PC-9 (cell line): ENCODE measurements at regions of chr1 and their contacts with region 1.

Region 1: GRCh38 chr1:244712669-244713068 is 59.7 kb downstream of the DESI2 start:
- DNase-seq: no peak
- H3K4me3 ChIP-seq: no peak overlapping the region
- H3K27ac ChIP-seq: no peak overlapping the region
- H3K4me1 ChIP-seq: no peaks in the 10 kb centered on the region
- H3K27me3 ChIP-seq: no peaks in the 10 kb centered on the region
- CTCF ChIP-seq: no peak

Region 2: DNA sequence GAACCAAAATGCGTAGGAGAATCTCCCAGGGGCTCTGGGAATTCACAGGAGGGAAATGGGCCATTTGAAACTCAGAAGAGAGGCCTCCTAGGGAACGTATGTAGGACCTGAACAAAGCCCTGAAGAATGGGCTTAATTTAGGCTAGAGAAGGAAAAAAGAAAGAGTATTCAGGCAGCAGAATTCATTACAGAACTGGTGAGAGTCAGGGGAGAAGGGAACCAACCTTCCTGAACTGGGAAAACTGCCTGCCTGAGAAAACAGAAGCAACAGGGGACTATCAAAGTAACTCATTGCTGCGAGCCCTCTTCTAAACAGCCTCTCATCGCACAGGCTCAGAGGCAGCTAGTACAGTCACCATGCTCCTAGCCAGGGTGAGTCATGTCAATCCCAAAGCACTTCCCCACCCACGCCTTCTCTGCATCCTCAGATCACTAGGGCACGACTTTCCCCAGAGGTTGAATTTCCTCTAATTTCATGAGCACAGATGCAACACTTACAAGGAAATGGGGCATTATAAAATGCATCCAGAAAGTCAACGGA is 359.0 kb before region 1 on chr1:
- CTCF ChIA-PET with region 1: no interaction called
- POLR2A ChIA-PET with region 1: no interaction called
- intact Hi-C with region 1: no loop called
- DNase-seq: peak; percentile 73 to 91
- H3K4me3 ChIP-seq: no peak overlapping the region
- H3K27ac ChIP-seq: peak overlapping the region; percentile 78
- H3K4me1 ChIP-seq: peaks cover 16% of the 10 kb centered on the region
- H3K27me3 ChIP-seq: no peaks in the 10 kb centered on the region
- CTCF ChIP-seq: no peak

Region 3: GRCh38 chr1:244576259-244576892 is 136.3 kb before region 1 on chr1:
- CTCF ChIA-PET with region 1: no interaction called
- POLR2A ChIA-PET with region 1: no interaction called
- intact Hi-C with region 1: no loop called
- DNase-seq: no peak
- H3K4me3 ChIP-seq: no peak overlapping the region
- H3K27ac ChIP-seq: no peak overlapping the region
- H3K4me1 ChIP-seq: no peaks in the 10 kb centered on the region
- H3K27me3 ChIP-seq: no peaks in the 10 kb centered on the region
- CTCF ChIP-seq: no peak

Region 4: GRCh38 chr1:244614113-244614836 is 98.4 kb before region 1 on chr1:
- CTCF ChIA-PET with region 1: no interaction called
- POLR2A ChIA-PET with region 1: no interaction called
- intact Hi-C with region 1: no loop called
- DNase-seq: no peak
- H3K4me3 ChIP-seq: no peak overlapping the region
- H3K27ac ChIP-seq: no peak overlapping the region
- H3K4me1 ChIP-seq: no peaks in the 10 kb centered on the region
- H3K27me3 ChIP-seq: no peaks in the 10 kb centered on the region
- CTCF ChIP-seq: no peak

Region 5: DNA sequence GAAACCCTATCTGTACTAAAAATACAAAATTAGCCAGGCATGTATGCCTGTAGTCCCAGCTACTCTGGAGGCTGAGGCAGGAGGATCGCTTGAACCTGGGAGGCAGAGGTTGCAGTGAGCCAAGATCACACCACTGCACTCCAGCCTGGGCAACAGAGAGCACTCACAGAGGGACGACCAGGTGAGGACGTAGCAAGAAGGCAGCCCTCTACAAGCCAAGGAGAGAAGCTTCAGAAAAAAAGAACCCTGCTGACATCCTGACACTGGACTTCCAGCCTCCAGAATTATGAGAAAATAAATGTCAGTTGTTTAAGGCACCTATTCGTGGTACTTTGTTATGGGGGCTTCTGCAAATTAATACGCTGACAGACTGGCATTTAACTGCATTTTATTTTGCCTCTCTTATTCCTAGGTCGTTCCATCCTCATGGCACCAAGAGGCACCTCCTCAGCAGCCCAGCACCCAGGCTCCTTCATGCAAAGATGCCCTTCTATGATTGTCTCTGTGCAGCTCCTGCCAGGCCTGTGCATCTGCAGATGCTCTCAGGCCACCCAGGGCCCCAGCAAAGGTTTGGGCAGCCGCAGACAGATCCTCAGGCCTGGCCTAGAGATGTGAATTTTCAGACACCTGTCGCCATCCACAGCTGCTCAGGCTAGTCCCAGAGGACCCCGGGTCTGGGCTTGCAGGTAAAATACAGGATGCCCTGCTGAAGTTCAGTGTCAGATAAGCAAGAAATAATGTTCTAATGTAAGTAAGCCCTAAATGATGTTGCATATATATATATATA is 36.8 kb after region 1 on chr1:
- CTCF ChIA-PET with region 1: no interaction called
- POLR2A ChIA-PET with region 1: no interaction called
- intact Hi-C with region 1: no loop called
- DNase-seq: no peak
- H3K4me3 ChIP-seq: no peak overlapping the region
- H3K27ac ChIP-seq: no peak overlapping the region
- H3K4me1 ChIP-seq: no peaks in the 10 kb centered on the region
- H3K27me3 ChIP-seq: no peaks in the 10 kb centered on the region
- CTCF ChIP-seq: no peak

Region 6: GRCh38 chr1:244778361-244778760 is 65.7 kb after region 1 on chr1:
- CTCF ChIA-PET with region 1: no interaction called
- POLR2A ChIA-PET with region 1: no interaction called
- intact Hi-C with region 1: loop called (anchors 5 kb)
- DNase-seq: peak in 1 of 2 experiments; percentile 61
- H3K4me3 ChIP-seq: no peak overlapping the region
- H3K27ac ChIP-seq: no peak overlapping the region
- H3K4me1 ChIP-seq: 0 out of 2 replicates have a peak, but pooled peaks cover 10% of the 10 kb centered on the region
- H3K27me3 ChIP-seq: no peaks in the 10 kb centered on the region
- CTCF ChIP-seq: no peak